ENCODE measurements at regions of chr2 and their contacts with region 1.

Region 1: GRCh38 chr2:86035883-86036668 is 69.6 kb downstream of the POLR1A start:
- DNase-seq: peak; percentile 74
- H3K4me3 Mint-ChIP-seq: peak overlapping the region; percentile 58
- H3K27ac Mint-ChIP-seq: peak overlapping the region; percentile 95
- H3K4me1 Mint-ChIP-seq: peaks cover 81% of the 10 kb centered on the region
- H3K27me3 Mint-ChIP-seq: no peaks in the 10 kb centered on the region

Region 2: DNA sequence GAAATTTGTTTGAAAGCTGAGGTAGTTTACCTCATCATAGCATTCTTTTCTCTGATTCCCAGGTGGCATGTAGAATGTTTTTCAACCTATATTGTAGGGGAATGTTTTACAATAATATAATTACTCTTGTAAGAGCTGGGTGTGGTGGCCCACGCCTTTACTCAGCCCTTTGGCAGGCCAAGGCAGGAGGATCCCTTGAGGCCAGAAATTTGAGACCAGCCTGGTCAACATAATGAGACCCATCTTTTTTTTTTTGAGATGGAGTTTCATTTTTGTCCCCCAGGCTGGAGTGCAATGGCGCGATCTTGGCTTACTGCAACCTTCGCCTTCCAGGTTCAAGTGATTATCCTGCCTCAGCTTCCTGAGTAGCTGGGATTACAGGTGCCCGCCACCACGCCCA is 416.5 kb before region 1 on chr2:
- CTCF ChIA-PET with region 1: no interaction called
- intact Hi-C with region 1: loop called (anchors 5 kb)
- DNase-seq: no peak
- H3K4me3 Mint-ChIP-seq: no peak overlapping the region
- H3K27ac Mint-ChIP-seq: no peak overlapping the region
- H3K4me1 Mint-ChIP-seq: peaks cover 21% of the 10 kb centered on the region
- H3K27me3 Mint-ChIP-seq: no peaks in the 10 kb centered on the region

Region 3: GRCh38 chr2:85852937-85853498 is 183.1 kb before region 1 on chr2:
- CTCF ChIA-PET with region 1: no interaction called
- intact Hi-C with region 1: loop called (anchors 1 kb)
- DNase-seq: peak; percentile 70
- H3K4me3 Mint-ChIP-seq: peak overlapping the region; percentile 74
- H3K27ac Mint-ChIP-seq: peak overlapping the region; percentile 98
- H3K4me1 Mint-ChIP-seq: peaks cover 70% of the 10 kb centered on the region
- H3K27me3 Mint-ChIP-seq: no peaks in the 10 kb centered on the region

Region 4: DNA sequence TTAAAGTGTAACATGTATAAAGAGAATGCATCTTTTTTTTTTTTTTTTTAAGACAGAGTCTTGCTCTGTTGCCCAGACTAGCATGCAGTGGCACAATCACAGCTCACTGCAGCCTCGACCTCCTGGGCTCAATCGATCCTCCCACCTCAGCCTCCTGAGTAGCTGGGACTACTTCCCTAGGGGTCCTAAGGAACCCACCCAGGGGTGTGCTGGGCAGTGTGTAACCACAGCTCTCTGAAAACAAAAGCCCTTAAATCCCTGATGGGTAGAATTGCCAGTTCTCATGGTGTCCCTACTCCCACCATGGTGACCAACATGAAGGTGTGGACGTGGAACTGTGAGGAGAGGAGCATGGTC is 41.7 kb before region 1 on chr2:
- CTCF ChIA-PET with region 1: no interaction called
- intact Hi-C with region 1: loop called (anchors 1 kb)
- DNase-seq: no peak
- H3K4me3 Mint-ChIP-seq: no peak overlapping the region
- H3K27ac Mint-ChIP-seq: no peak overlapping the region
- H3K4me1 Mint-ChIP-seq: peaks cover 39% of the 10 kb centered on the region
- H3K27me3 Mint-ChIP-seq: no peaks in the 10 kb centered on the region

Region 5: DNA sequence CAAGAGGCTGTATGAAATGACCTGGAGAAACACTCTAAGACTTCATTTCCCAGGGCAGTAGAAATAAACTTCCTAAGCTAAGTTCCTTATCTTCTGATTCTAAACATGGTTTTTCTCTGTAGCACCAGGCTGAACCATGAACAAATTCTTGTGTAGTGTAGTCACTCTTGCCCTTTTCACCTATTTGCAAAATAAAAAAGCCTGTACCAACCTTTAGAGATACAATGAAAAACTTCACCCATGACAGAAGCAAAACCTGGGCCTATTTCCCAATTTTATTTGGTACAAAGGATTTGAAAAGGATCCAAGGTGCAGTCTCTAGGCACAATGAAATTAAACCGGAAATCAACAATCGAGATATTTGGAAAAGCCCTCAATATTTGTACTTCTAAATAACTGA is 26.0 kb after region 1 on chr2:
- CTCF ChIA-PET with region 1: no interaction called
- intact Hi-C with region 1: no loop called
- DNase-seq: no peak
- H3K4me3 Mint-ChIP-seq: no peak overlapping the region
- H3K27ac Mint-ChIP-seq: no peak overlapping the region
- H3K4me1 Mint-ChIP-seq: peaks cover 3% of the 10 kb centered on the region
- H3K27me3 Mint-ChIP-seq: no peaks in the 10 kb centered on the region

Region 6: DNA sequence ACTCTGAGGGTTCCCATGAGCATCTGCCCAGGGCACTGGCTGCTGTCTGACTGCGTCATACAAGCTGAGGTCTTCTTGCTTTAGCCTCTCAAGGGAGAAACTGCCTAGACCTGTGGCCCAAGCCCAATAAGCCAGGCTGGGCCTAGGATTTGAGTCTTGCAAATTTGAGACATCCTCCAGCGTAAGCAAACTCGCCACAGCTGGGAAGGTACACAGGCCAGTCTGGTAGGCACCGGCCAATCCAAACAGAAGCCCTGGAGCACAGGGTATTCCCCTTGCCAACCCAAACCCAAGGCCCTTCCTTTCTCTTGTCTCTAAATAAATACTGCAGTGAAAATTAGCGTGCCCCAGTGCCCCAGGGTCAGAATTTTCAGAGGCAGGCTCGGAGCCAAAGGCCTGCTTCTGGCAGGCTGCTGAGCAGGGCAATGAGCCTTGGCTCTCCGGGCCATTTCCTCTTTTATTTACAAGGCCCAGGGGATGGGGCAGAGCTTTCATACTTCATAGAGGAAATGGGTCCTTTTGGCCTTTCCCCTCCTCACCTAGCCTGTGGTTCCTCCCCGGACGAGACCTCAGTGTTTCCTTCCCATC is 36.3 kb after region 1 on chr2:
- CTCF ChIA-PET with region 1: interaction called, 3 read pairs
- intact Hi-C with region 1: loop called (anchors 1 kb)
- DNase-seq: no peak
- H3K4me3 Mint-ChIP-seq: no peak overlapping the region
- H3K27ac Mint-ChIP-seq: peak overlapping the region; percentile 53
- H3K4me1 Mint-ChIP-seq: peaks cover 14% of the 10 kb centered on the region
- H3K27me3 Mint-ChIP-seq: no peaks in the 10 kb centered on the region

Region 7: DNA sequence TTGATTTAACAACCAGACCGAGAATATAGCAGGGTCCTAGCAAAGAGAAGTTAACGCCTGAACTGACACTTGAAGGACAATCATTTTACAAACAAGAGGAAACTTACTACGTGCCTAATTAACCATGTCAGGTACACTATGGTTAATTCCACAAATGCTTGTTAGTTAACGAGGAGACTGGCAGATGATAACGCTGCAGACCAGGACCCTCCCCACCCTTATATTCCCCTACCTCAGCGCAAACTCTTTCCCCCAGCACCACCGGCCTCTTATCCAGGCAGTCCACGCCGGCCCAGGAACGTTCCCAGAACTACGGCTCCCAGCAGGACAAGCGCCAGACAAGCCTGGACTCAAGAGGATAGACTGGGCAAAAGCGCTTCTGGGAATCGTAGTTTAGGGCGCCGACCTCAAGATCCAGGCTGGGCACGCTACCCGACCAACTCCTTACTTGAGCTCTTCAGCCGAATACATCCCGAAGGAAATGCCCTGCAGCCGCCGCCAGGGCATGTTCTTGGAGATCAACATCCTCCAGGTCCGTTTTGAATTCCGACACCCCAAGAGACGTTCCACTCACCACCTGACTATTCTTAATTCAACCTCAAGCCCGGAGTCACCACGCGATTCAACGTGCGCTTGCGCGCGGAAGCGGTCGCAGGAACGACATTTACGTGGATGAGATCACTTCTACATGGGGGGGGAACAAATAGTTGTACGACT is 69.3 kb after region 1 on chr2 and contains the start of gene POLR1A:
- CTCF ChIA-PET with region 1: no interaction called
- intact Hi-C with region 1: loop called (anchors 1 kb)
- DNase-seq: peak; percentile 87
- H3K4me3 Mint-ChIP-seq: peak within 1 kb of the TSS; percentile 89
- H3K27ac Mint-ChIP-seq: peak within 1 kb of the TSS; percentile 99
- H3K4me1 Mint-ChIP-seq: peaks cover 57% of the 10 kb centered on the region
- H3K27me3 Mint-ChIP-seq: no peaks in the 10 kb centered on the region
- total RNA-seq, gene POLR1A: 25.3 to 27.1 TPM